ENCODE measurements at regions of chr12 and their contacts with region 1.

Region 1: DNA sequence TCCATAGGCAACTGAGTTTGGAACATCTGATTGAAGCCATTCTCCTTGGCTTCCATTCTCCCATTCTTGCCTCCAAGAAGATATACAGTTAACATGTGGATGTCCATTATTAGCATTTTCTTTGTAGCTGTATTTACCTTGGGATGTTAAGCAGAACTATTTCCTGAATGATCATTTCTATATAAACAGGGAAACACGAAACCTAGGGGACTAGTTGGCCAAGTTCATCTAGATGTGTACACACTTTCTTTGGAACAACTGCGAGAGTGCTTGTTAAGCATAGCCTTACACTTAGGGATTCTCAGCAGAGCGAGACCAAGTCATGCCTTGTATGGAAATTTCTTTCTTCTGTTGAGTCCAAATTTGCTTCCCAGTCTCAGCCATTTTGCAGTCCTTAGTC is 42.1 kb downstream of the DRAM1 start:
- DNase-seq: no peak
- H3K4me3 ChIP-seq: no peak overlapping the region
- H3K27ac ChIP-seq: no peak overlapping the region
- H3K4me1 ChIP-seq: no peaks in the 10 kb centered on the region
- H3K27me3 ChIP-seq: no peaks in the 10 kb centered on the region
- CTCF ChIP-seq: no peak

Region 2: DNA sequence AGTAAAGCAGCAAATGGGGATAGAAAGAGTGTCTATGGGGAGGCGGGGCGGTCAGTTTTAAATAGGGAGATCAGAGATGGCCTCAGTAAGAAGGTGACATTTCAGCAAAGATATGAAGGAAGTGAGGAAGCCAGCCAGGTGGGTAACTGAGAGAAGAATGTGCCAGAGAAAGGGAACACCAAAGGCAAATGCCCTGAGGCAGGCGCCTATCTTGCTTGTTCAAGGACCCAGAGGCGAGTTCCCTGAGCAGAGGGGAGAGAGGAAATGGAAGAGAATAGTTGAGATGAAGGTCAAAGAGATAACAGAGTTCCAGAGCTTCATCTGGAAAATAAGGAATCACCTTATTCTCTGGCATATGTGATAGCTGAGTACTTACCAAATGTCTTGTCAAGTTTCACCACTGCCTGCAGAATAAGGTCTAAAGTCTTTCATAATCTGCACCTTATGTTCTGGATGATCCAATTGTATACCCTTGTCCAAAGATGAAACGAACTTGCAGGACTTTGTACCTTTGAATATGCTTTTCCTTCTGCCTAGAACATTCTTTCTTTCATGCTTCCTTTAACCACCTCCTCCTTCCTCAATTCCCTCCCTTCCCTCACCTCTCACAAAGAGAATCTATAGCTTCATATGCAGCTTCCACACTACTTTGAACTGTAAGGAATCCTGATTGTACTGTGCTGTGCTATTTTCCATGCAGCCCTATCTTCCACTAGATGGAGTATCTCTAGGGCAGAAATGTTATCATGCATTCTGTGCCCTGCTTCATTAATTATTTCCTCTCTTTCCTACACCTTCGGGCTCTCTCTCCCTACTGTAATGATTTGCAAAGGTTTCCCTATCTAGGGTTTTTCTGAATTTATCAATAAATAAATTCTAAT is 127.2 kb before region 1 on chr12:
- CTCF ChIA-PET with region 1: no interaction called
- dilution Hi-C with region 1: no loop called
- in situ Hi-C with region 1: no loop called
- intact Hi-C with region 1: no loop called
- DNase-seq: no peak
- H3K4me3 ChIP-seq: no peak overlapping the region
- H3K27ac ChIP-seq: no peak overlapping the region
- H3K4me1 ChIP-seq: no peaks in the 10 kb centered on the region
- H3K27me3 ChIP-seq: no peaks in the 10 kb centered on the region
- CTCF ChIP-seq: peak; percentile 19 to 52

Region 3: GRCh38 chr12:101945369-101946231 is 26.2 kb after region 1 on chr12:
- CTCF ChIA-PET with region 1: no interaction called
- dilution Hi-C with region 1: no loop called
- in situ Hi-C with region 1: no loop called
- intact Hi-C with region 1: no loop called
- DNase-seq: no peak
- H3K4me3 ChIP-seq: no peak overlapping the region
- H3K27ac ChIP-seq: no peak overlapping the region
- H3K4me1 ChIP-seq: no peaks in the 10 kb centered on the region
- H3K27me3 ChIP-seq: no peaks in the 10 kb centered on the region
- CTCF ChIP-seq: no peak

Region 4: DNA sequence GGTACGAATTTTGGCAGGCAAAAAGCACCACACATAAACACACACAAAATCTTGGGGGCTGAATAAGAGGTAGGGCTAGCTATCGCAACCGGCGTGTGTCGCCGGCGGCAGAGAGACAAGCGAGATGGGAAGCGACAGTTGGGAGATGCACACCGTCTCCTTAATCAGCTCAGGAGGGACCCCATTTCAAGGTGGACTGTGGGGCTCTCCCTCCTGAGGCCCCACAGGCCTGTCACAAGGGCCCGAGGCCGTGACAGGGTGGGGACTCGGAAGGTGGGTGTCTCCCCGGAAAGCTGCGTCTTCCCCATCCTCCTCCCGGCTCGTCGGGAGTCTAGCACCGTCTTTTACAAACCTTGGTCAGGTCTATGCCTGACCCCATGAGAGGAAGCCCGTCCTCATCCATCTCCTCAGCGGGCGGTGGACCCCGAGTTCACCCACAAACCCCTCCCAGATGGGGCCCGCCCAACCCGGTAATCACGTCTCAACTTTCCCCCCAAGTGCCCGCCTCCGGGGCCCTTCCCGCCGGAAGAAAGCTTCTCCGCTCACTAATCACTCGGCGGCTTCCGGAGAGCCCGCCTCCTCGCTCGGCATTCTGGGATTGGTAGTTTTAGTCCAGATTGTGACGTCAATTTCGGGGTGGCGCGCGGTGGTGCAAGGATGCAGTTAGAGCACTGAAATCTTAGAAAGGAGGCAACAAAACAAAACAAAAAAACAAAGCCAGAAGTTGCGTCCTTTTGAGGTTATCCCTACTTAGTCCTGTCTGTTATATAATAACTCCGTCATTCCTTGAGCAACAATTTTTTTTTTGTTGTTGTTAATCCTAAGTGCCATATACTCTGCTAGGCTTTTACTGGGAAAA is 142.3 kb after region 1 on chr12 and contains the start of gene WASHC3:
- CTCF ChIA-PET with region 1: no interaction called
- dilution Hi-C with region 1: no loop called
- in situ Hi-C with region 1: no loop called
- intact Hi-C with region 1: loop called (anchors 1 kb)
- DNase-seq: peak; percentile 90
- H3K4me3 ChIP-seq: peak within 1 kb of the TSS; percentile 68 to 97 (median 74)
- H3K27ac ChIP-seq: peak within 1 kb of the TSS; percentile 68
- H3K4me1 ChIP-seq: peaks cover 4% of the 10 kb centered on the region
- H3K27me3 ChIP-seq: no peaks in the 10 kb centered on the region
- CTCF ChIP-seq: no peak
- total RNA-seq, gene WASHC3: 48.9 to 61.2 TPM

Region 5: DNA sequence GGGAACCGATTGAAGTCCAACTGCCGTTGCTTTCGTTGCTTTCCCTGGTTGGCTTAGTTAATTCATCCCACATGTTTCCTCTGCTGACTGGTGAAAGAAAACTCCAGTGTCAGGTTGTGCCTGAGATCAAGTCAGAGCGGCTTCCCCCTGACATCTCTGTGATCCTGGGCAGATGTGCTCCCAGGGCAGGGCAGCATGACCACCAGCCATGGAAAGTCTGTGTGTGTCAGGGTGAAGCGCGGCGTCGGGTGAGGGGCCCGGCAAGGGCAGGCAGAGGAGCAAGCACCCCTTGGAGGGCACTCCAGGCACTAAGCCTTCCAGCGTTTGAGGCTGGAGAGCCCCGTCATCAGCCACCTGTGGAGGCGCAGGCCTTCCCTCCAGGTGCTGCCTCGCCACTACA is 615.5 kb after region 1 on chr12:
- CTCF ChIA-PET with region 1: no interaction called
- dilution Hi-C with region 1: no loop called
- in situ Hi-C with region 1: no loop called
- intact Hi-C with region 1: no loop called
- DNase-seq: no peak
- H3K4me3 ChIP-seq: no peak overlapping the region
- H3K27ac ChIP-seq: no peak overlapping the region
- H3K4me1 ChIP-seq: no peaks in the 10 kb centered on the region
- H3K27me3 ChIP-seq: no peaks in the 10 kb centered on the region
- CTCF ChIP-seq: no peak

Measured in mammary epithelial cell (primary cell).